Breast epithelium (tissue), 4 donors: ENCODE measurements at regions of chr7 and their contacts with region 1.

Region 1: GRCh38 chr7:143380255-143380645 is 895 bp upstream of the ZYX start:
- DNase-seq: peak; percentile 86 to 88
- H3K4me3 ChIP-seq: peak overlapping the region; percentile 87 to 95 (median 94)
- H3K27ac ChIP-seq: peak overlapping the region; percentile 98 to 100
- H3K4me1 ChIP-seq: peaks cover 8 to 9% of the 10 kb centered on the region in 2 donors
- H3K27me3 ChIP-seq: no peaks in the 10 kb centered on the region
- CTCF ChIP-seq: peak; percentile 94 to 96 (median 95)
- POLR2A ChIP-seq: no peak

Region 2: DNA sequence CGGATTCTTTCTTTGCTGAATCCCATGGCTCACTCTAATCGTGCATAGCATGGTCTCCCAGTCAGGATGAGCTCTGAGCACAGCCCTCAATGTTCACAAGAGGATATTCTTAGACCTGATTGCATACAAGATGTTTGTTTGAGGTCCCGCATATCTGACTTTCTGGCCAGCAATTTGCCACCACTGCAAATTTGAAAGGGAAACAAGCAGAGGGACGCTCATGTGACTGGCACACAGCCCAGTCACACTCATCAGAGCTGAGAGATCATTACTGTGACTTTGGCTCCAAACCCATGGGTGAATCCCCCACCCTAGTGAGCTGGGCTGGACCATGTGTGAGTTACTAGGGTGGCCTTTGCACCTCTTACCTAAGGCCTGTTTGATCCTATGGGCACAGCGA is 107.3 kb after region 1 on chr7:
- intact Hi-C with region 1: loop called (anchors 5 kb)
- DNase-seq: peak in 1 of 2 donors; percentile 30
- H3K4me3 ChIP-seq: no peak overlapping the region
- H3K27ac ChIP-seq: peak overlapping the region; percentile 5 to 83
- H3K4me1 ChIP-seq: no peaks in the 10 kb centered on the region
- H3K27me3 ChIP-seq: no peaks in the 10 kb centered on the region
- CTCF ChIP-seq: no peak
- POLR2A ChIP-seq: no peak